Activated CD4-positive, alpha-beta T cell treated with anti-CD3 and anti-CD28 coated beads, Interleukin-2, amount 10 ng/mL, durations not matched to agents 7 days and 5 days (primary cell): ENCODE measurements at regions of chr3 and their contacts with region 1.

Region 1: DNA sequence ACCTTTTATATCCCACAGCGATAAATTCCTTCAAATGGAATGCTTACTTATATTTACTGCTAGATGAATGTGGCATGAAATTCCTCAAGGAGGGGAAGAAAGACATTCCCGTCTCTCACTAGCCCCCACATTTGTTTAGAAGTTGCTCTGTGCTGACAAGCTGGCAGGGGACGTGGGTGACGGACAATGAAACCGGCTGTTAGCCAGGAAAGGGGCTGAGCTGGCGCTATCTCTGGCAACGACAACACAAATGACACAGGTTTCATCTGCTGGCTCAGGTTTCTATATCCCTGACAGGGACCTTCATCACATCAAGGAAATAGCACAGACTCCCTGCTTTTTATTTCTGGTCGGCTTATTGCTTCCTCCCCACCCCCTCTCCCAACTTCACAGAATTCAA is 15.8 kb downstream of the RUVBL1 start:
- DNase-seq: no peak
- H3K4me3 Mint-ChIP-seq: no peak overlapping the region
- H3K27ac Mint-ChIP-seq: no peak overlapping the region
- H3K4me1 Mint-ChIP-seq: peaks cover 21% of the 10 kb centered on the region
- H3K27me3 Mint-ChIP-seq: no peaks in the 10 kb centered on the region

Region 2: GRCh38 chr3:127911421-127911931 is 196.4 kb before region 1 on chr3:
- CTCF ChIA-PET with region 1: no interaction called
- POLR2A ChIA-PET with region 1: no interaction called
- DNase-seq: no peak
- H3K4me3 Mint-ChIP-seq: no peak overlapping the region
- H3K27ac Mint-ChIP-seq: no peak overlapping the region
- H3K4me1 Mint-ChIP-seq: peaks cover 8% of the 10 kb centered on the region
- H3K27me3 Mint-ChIP-seq: peaks cover 50% of the 10 kb centered on the region

Region 3: GRCh38 chr3:128080320-128081080 is 27.3 kb before region 1 on chr3:
- CTCF ChIA-PET with region 1: no interaction called
- POLR2A ChIA-PET with region 1: no interaction called
- DNase-seq: no peak
- H3K4me3 Mint-ChIP-seq: no peak overlapping the region
- H3K27ac Mint-ChIP-seq: no peak overlapping the region
- H3K4me1 Mint-ChIP-seq: peaks cover 8% of the 10 kb centered on the region
- H3K27me3 Mint-ChIP-seq: peaks cover 4% of the 10 kb centered on the region

Region 4: DNA sequence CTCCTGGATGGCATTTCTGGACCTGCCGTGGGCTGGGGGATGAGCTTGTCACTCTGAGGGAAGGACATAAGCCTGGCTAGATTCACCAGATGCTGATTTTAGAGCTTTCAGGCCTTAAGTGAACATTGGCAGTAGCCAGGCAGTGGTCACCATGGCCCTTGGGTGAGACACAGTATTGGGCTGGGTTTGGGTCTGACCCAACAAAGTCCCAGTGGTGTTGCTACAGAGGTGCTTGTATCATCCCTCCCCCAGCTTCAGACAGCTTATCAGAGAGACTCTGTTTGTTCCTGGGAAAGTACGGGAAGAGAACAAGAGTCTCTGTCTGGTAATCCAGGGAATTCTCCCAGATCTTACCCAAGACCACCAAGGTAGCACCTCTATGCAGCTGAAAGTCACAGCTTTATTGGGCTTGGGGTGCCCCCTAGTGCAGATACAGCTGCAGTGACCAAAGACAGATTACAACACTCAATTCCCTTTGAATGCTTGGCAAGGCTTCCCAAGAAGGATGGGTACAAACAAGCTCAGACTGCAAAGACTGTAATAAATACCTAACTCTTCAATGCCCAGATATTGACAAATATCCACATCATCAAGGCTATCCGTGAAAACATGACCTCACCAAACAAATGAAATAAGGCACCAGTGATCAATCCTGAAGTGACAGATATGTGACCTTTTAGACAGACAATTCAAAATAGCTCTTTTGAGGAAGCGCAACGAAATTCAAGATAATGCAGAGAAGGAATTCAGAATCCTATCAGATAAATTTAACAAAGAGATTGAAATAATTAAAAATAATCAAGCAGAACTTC is 25.6 kb after region 1 on chr3:
- CTCF ChIA-PET with region 1: interaction called, 11 read pairs
- POLR2A ChIA-PET with region 1: no interaction called
- DNase-seq: peak; percentile 46
- H3K4me3 Mint-ChIP-seq: no peak overlapping the region
- H3K27ac Mint-ChIP-seq: no peak overlapping the region
- H3K4me1 Mint-ChIP-seq: no peaks in the 10 kb centered on the region
- H3K27me3 Mint-ChIP-seq: peaks cover 17% of the 10 kb centered on the region